ENCODE measurements at regions of chr12 and their contacts with region 1.

Region 1: GRCh38 chr12:4538207-4539160 is at the start of gene RAD51AP1:
- DNase-seq: peak; percentile 84
- ATAC-seq: peak; percentile 100
- H3K4me3 ChIP-seq: peak within 1 kb of the TSS; percentile 95 to 98
- H3K27ac ChIP-seq: peak within 1 kb of the TSS; percentile 96
- H3K4me1 ChIP-seq: peaks cover 11% of the 10 kb centered on the region; the same call in 1 of the 2 replicates
- H3K27me3 ChIP-seq: no peaks in the 10 kb centered on the region
- CTCF ChIP-seq: no peak
- total RNA-seq, gene RAD51AP1: 18.1 TPM

Region 2: GRCh38 chr12:4056910-4057845 is 481.3 kb before region 1 on chr12:
- CTCF ChIA-PET with region 1: no interaction called
- POLR2A ChIA-PET with region 1: no interaction called
- in situ Hi-C with region 1: no loop called
- intact Hi-C with region 1: no loop called
- DNase-seq: no peak
- ATAC-seq: no peak
- H3K4me3 ChIP-seq: no peak overlapping the region
- H3K27ac ChIP-seq: no peak overlapping the region
- H3K4me1 ChIP-seq: no peaks in the 10 kb centered on the region
- H3K27me3 ChIP-seq: no peaks in the 10 kb centered on the region; the same call in none of the 2 replicates
- CTCF ChIP-seq: no peak

Region 3: DNA sequence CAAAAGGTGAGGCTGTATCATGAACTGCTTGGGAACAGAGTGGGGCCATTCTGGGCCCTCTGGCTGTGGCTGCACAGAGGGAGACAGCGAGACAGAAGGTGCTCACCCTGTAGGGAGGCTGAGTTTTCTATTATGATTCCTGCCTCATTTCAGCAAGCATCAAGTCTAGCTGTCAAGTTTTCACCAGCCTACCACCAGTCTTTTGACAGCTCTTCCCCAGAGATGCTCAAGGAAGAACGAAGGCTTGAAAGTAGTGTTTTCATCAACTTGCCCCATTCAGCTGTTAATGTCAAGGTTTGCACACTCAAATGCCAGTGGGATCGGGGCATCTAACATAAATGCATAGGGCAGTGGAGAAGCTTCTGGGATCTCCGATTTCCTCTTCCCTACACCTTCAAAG is 168.9 kb before region 1 on chr12:
- CTCF ChIA-PET with region 1: no interaction called
- POLR2A ChIA-PET with region 1: interaction called, 16 read pairs
- in situ Hi-C with region 1: no loop called
- intact Hi-C with region 1: no loop called
- DNase-seq: no peak
- ATAC-seq: no peak
- H3K4me3 ChIP-seq: no peak overlapping the region
- H3K27ac ChIP-seq: no peak overlapping the region
- H3K4me1 ChIP-seq: no peaks in the 10 kb centered on the region
- H3K27me3 ChIP-seq: peaks cover 4% of the 10 kb centered on the region; the same call in 1 of the 2 replicates
- CTCF ChIP-seq: no peak

Region 4: DNA sequence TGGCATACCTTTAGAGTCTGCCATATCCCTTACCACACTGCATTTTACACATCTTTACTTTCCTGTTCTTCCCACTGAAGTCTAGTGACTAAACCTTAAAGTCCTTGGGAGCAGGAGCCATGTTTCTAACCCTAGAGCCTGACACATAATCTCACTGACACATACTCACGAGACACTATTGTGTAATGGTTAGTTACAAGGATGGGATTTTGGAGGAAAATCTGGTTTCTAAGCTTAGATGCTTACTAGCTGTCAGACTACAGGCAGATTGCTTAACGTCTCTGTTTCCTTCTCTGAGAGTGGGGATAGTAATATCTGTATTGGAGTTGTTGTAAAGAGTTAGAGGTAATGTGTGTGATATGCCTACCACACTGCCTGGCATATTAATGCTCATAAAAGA is 17.3 kb after region 1 on chr12:
- CTCF ChIA-PET with region 1: no interaction called
- POLR2A ChIA-PET with region 1: interaction called, 12 read pairs
- in situ Hi-C with region 1: no loop called
- intact Hi-C with region 1: no loop called
- DNase-seq: no peak
- ATAC-seq: no peak
- H3K4me3 ChIP-seq: no peak overlapping the region
- H3K27ac ChIP-seq: no peak overlapping the region
- H3K4me1 ChIP-seq: no peaks in the 10 kb centered on the region
- H3K27me3 ChIP-seq: no peaks in the 10 kb centered on the region
- CTCF ChIP-seq: no peak

Region 5: DNA sequence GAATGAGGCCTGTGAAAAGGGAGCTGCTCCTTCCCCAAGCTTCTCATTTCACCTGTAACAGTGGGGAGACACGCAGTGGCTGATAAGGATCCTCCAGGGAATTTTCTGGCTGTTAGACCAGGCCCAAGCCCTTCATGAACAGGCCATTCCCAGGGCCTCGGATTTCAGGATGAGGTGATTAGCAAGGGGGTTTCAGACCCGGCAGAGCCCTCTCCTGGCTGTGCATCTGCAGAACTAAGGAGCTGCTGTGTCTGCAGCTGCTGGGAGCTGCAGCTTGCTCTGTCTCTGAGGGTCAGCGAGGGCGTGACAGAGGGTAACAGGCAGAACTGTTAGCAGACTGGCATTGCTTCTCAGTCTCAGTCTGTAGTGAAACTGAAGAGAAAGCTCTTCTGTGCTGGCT is 615.6 kb after region 1 on chr12:
- CTCF ChIA-PET with region 1: no interaction called
- POLR2A ChIA-PET with region 1: no interaction called
- in situ Hi-C with region 1: no loop called
- intact Hi-C with region 1: no loop called
- DNase-seq: no peak
- ATAC-seq: no peak
- H3K4me3 ChIP-seq: no peak overlapping the region
- H3K27ac ChIP-seq: no peak overlapping the region
- H3K4me1 ChIP-seq: no peaks in the 10 kb centered on the region
- H3K27me3 ChIP-seq: 0 out of 2 replicates have a peak, but pooled peaks cover 2% of the 10 kb centered on the region
- CTCF ChIP-seq: no peak